Left ventricle myocardium superior (tissue), 1 donor: ENCODE measurements at regions of chr14 and their contacts with region 1.

Region 1: GRCh38 chr14:31084385-31084784 is 58.2 kb upstream of the STRN3 start:
- DNase-seq: no peak
- ATAC-seq: no peak

Region 2: GRCh38 chr14:30982533-30982932 is 101.9 kb before region 1 on chr14:
- intact Hi-C with region 1: loop called (anchors 5 kb)
- DNase-seq: no peak
- ATAC-seq: no peak

Region 3: GRCh38 chr14:31047503-31047902 is 36.9 kb before region 1 on chr14:
- intact Hi-C with region 1: no loop called
- DNase-seq: no peak
- ATAC-seq: no peak